ENCODE measurements at regions of chr4 and their contacts with region 1.

Region 1: GRCh38 chr4:54433686-54434085 is 204.6 kb downstream of the PDGFRA start:
- DNase-seq: no peak
- H3K4me3 ChIP-seq: no peak overlapping the region
- H3K27ac ChIP-seq: no peak overlapping the region
- H3K4me1 ChIP-seq: peaks cover 0 to 7% (median 0%) of the 10 kb centered on the region in 4 experiments
- H3K27me3 ChIP-seq: no peaks in the 10 kb centered on the region

Region 2: DNA sequence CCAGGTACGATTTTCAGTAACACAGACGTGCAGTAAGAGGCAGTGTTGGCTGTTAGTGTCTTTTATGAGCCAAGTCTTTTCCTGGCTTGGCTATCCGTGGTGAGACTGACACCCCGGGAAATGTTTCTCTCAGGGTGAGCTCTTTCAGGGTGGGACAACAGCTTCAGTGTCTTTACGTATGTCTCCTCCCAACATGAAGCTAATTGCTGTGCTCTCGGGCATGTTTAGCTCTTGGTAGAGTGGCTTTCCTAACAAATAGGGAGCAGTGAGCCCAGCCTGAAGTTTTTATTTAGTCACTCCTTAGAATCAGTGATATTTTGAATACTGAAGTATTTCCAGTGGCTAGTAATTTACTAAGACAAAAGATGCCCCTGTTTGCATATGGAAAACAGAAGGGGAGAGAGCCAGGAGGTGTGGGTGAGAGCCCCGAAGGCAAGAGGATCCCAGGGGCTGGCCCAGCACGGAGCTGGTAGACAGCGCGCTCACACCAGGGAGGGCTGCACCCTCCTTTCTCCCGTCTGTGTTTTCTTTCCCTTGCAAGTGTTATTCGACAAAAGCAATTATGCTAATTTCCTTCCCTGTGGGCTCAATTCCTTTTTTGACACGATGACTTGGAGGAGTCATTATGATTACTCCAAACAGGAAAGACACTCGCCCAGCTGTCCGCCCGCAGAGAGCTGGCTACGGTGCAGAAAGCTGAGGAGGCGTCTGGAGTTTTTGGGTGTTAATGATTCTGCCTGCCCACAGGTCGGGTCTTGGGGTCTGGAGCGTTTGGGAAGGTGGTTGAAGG is 156.8 kb before region 1 on chr4:
- CTCF ChIA-PET with region 1: no interaction called
- POLR2A ChIA-PET with region 1: no interaction called
- DNase-seq: peak in 1 of 3 donors; percentile 19
- H3K4me3 ChIP-seq: peak overlapping the region in 3 of 7 experiments; percentile 0 to 48 (median 11)
- H3K27ac ChIP-seq: no peak overlapping the region
- H3K4me1 ChIP-seq: peaks cover 3 to 28% (median 25%) of the 10 kb centered on the region in 4 experiments
- H3K27me3 ChIP-seq: no peaks in the 10 kb centered on the region

Region 3: GRCh38 chr4:54414545-54414944 is 19.1 kb before region 1 on chr4:
- CTCF ChIA-PET with region 1: interaction called, 11 read pairs
- POLR2A ChIA-PET with region 1: no interaction called
- DNase-seq: peak in 2 of 3 donors; percentile 43 to 45
- H3K4me3 ChIP-seq: no peak overlapping the region
- H3K27ac ChIP-seq: no peak overlapping the region
- H3K4me1 ChIP-seq: no peaks in the 10 kb centered on the region
- H3K27me3 ChIP-seq: no peaks in the 10 kb centered on the region

Region 4: DNA sequence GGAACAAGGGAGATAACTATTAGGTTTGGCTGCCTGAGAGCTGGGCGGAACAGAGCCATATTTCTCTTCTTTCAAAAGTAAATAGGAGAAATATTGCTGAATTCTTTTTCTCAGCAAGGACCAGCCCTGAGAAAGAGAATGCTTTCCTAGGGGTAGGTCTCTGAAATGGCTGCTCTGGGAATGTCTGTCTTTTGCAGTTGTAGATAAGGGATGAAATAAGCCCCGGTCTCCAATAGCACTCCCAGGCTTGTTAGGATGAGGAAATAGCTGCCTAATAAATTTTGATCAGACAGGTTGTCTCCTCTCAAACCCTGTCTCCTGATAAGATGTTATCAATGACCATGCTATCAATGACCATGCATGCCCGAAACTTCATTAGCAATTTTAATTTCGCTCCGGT is 16.3 kb after region 1 on chr4:
- CTCF ChIA-PET with region 1: no interaction called
- POLR2A ChIA-PET with region 1: no interaction called
- DNase-seq: peak in 2 of 3 donors; percentile 20 to 40
- H3K4me3 ChIP-seq: no peak overlapping the region
- H3K27ac ChIP-seq: no peak overlapping the region
- H3K4me1 ChIP-seq: peaks cover 2 to 23% (median 10%) of the 10 kb centered on the region in 4 experiments
- H3K27me3 ChIP-seq: no peaks in the 10 kb centered on the region

Measured in common myeloid progenitor, CD34-positive (primary cell).